Psoas muscle (tissue), 8 donors: ENCODE measurements at regions of chr1 and their contacts with region 1.

Region 1: GRCh38 chr1:167943541-167943940 is 6.7 kb upstream of the MPC2 start:
- DNase-seq: no peak
- ATAC-seq: no peak
- H3K4me3 ChIP-seq: no peak overlapping the region
- H3K27ac ChIP-seq: no peak overlapping the region
- H3K4me1 ChIP-seq: peaks cover 55% of the 10 kb centered on the region
- H3K27me3 ChIP-seq: no peaks in the 10 kb centered on the region
- CTCF ChIP-seq: no peak

Region 2: GRCh38 chr1:167973832-167974231 is 30.3 kb after region 1 on chr1:
- intact Hi-C with region 1: no loop called
- DNase-seq: no peak
- ATAC-seq: no peak
- H3K4me3 ChIP-seq: no peak overlapping the region
- H3K27ac ChIP-seq: no peak overlapping the region
- H3K4me1 ChIP-seq: peaks cover 10% of the 10 kb centered on the region
- H3K27me3 ChIP-seq: no peaks in the 10 kb centered on the region
- CTCF ChIP-seq: no peak

Region 3: DNA sequence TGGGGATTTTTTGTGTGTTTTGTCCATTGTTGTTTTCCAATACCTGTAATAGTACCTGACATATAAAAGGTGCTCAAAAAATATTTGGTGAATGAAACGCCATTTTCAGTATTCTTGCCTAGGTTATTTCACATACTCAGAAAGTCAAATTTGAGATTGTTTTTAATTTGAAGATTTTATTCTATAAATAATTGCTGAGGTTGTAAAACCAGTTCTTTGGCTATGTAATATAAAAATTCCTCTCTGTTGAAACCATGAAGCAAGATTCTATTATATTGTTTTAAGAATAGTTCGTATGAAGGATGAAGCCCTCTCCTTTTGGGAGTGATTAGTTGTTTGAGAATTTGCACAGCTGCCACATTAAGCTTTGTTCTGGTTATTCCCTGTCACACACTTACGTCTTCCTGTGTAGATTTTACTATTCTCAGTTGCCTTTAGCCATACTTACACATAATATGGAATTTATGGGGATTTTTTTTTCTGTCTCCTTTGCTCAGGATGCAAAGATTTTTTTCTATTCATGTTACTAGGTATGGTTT is 53.6 kb after region 1 on chr1:
- intact Hi-C with region 1: loop called in 1 of 2 experiments (anchors 5 kb)
- DNase-seq: no peak
- ATAC-seq: no peak
- H3K4me3 ChIP-seq: no peak overlapping the region
- H3K27ac ChIP-seq: no peak overlapping the region
- H3K4me1 ChIP-seq: peaks cover 7% of the 10 kb centered on the region
- H3K27me3 ChIP-seq: no peaks in the 10 kb centered on the region
- CTCF ChIP-seq: no peak